Endothelial cell of umbilical vein (primary cell): ENCODE measurements at regions of chr2 and their contacts with region 1.

Region 1: DNA sequence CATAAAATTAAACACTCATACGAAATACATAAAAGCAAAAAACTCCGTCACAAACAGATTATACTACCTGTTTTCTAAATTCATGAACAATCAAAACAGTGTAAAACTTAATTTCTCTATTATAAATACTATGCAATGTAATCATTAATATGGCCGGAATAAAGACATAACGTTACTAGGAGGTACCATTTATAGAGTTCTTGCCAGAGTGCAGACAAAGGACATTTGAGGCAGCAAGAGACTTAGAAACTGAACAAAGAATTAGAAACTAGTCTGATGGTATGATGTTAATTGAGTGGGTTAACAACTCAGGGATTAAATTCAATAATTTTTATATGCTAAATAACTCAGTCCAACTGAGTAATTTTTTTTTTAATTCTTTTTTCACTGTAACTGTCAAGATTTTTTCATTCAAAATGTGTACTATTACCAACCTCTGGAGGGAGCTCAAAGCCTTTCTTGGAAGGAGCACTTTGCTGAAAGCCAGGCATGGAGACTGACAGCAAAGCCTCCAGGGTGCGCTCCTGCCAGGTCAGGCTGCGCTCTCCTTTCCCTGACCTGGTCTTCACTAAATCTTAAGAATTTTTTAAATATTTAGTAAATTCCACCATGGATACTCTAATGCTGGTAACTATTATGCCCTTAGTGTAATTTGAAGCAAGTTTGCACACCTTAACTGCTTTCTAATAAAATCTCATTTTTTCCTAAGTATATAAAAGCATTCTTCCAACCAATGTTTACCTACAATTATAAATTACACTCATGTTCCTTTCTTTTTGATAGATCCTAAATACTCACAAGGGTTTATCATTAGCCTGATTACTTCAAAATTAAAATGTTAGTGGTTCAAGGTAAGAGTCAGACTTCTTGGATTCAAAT is 34.1 kb downstream of the WDR35 start:
- DNase-seq: peak; percentile 80
- H3K4me3 ChIP-seq: no peak overlapping the region
- H3K27ac ChIP-seq: no peak overlapping the region
- H3K4me1 ChIP-seq: no peaks in the 10 kb centered on the region
- H3K27me3 ChIP-seq: no peaks in the 10 kb centered on the region
- CTCF ChIP-seq: peak; percentile 80 to 85
- POLR2A ChIP-seq: no peak

Region 2: GRCh38 chr2:19607931-19608771 is 347.6 kb before region 1 on chr2:
- CTCF ChIA-PET with region 1: no interaction called
- POLR2A ChIA-PET with region 1: no interaction called
- dilution Hi-C with region 1: no loop called
- intact Hi-C with region 1: no loop called
- DNase-seq: no peak
- H3K4me3 ChIP-seq: no peak overlapping the region
- H3K27ac ChIP-seq: no peak overlapping the region
- H3K4me1 ChIP-seq: no peaks in the 10 kb centered on the region
- H3K27me3 ChIP-seq: no peaks in the 10 kb centered on the region
- CTCF ChIP-seq: no peak
- POLR2A ChIP-seq: no peak

Region 3: GRCh38 chr2:19786408-19787058 is 169.2 kb before region 1 on chr2:
- CTCF ChIA-PET with region 1: no interaction called
- POLR2A ChIA-PET with region 1: no interaction called
- dilution Hi-C with region 1: no loop called
- intact Hi-C with region 1: no loop called
- DNase-seq: no peak
- H3K4me3 ChIP-seq: no peak overlapping the region
- H3K27ac ChIP-seq: no peak overlapping the region
- H3K4me1 ChIP-seq: no peaks in the 10 kb centered on the region
- H3K27me3 ChIP-seq: peaks cover 0 to 2% of the 10 kb centered on the region in 2 experiments
- CTCF ChIP-seq: no peak
- POLR2A ChIP-seq: no peak

Region 4: GRCh38 chr2:19901442-19902215 is 54.2 kb before region 1 on chr2 and contains the start of gene TTC32:
- CTCF ChIA-PET with region 1: interaction called, 3 read pairs
- POLR2A ChIA-PET with region 1: no interaction called
- dilution Hi-C with region 1: no loop called
- intact Hi-C with region 1: loop called (anchors 2 kb)
- DNase-seq: peak; percentile 97
- H3K4me3 ChIP-seq: peak within 1 kb of the TSS; percentile 28 to 97 (median 86)
- H3K27ac ChIP-seq: peak within 1 kb of the TSS; percentile 90
- H3K4me1 ChIP-seq: peaks cover 25% of the 10 kb centered on the region
- H3K27me3 ChIP-seq: no peaks in the 10 kb centered on the region
- CTCF ChIP-seq: peak in 1 of 2 donors; percentile 12
- POLR2A ChIP-seq: peak; percentile 89
- total RNA-seq, gene TTC32: 8.8 and 13.8 TPM in 2 replicates

Region 5: GRCh38 chr2:19971691-19972090 is 15.9 kb after region 1 on chr2:
- CTCF ChIA-PET with region 1: interaction called, 17 read pairs
- POLR2A ChIA-PET with region 1: no interaction called
- dilution Hi-C with region 1: no loop called
- intact Hi-C with region 1: no loop called
- DNase-seq: peak; percentile 77
- H3K4me3 ChIP-seq: no peak overlapping the region
- H3K27ac ChIP-seq: peak overlapping the region; percentile 83
- H3K4me1 ChIP-seq: peaks cover 13% of the 10 kb centered on the region
- H3K27me3 ChIP-seq: no peaks in the 10 kb centered on the region
- CTCF ChIP-seq: no peak
- POLR2A ChIP-seq: no peak

Region 6: DNA sequence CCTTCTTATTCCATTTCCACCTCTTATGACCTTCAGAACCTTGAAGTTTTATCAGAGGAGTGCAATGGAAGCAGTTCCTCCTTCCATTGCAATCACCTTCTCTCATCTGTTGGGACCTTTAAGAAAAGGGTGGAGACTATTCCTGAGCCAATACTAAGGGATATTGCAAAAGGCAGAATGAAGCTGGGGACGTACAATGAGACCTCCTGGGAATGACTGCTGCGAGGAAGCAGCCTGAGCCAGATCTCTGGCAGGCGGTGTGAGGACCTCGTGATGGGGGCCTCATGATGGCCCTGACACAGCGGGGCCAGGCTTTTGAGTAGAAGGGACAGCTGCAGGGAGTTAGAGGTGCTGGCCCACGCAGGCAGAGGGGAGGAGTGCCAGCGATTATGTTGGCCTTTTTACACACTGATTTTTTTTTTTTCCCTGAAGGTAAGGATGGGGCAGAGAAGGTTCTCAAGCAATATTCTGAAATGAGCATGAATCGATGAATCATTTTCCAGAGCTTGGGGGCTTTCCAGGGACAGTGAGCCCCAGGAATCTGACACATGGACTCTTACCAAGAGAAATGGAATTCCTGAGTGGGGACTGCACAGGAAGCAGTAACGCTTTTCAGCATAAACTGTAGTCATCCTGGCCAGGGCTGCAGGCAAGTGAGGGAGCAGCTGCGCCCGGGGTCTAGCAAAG is 135.7 kb after region 1 on chr2:
- CTCF ChIA-PET with region 1: interaction called, 91 read pairs
- POLR2A ChIA-PET with region 1: no interaction called
- dilution Hi-C with region 1: no loop called
- intact Hi-C with region 1: loop called (anchors 1 kb)
- DNase-seq: peak; percentile 61
- H3K4me3 ChIP-seq: no peak overlapping the region
- H3K27ac ChIP-seq: no peak overlapping the region
- H3K4me1 ChIP-seq: no peaks in the 10 kb centered on the region
- H3K27me3 ChIP-seq: peaks cover 2 to 8% of the 10 kb centered on the region in 2 experiments
- CTCF ChIP-seq: no peak
- POLR2A ChIP-seq: no peak

Region 7: GRCh38 chr2:20106746-20107145 is 151.0 kb after region 1 on chr2:
- CTCF ChIA-PET with region 1: interaction called, 15 read pairs
- POLR2A ChIA-PET with region 1: no interaction called
- dilution Hi-C with region 1: no loop called
- intact Hi-C with region 1: no loop called
- DNase-seq: peak; percentile 27
- H3K4me3 ChIP-seq: peak overlapping the region in 1 of 3 experiments; percentile 26
- H3K27ac ChIP-seq: no peak overlapping the region
- H3K4me1 ChIP-seq: no peaks in the 10 kb centered on the region
- H3K27me3 ChIP-seq: peaks cover 2 to 3% of the 10 kb centered on the region in 2 experiments
- CTCF ChIP-seq: peak; percentile 47 to 80
- POLR2A ChIP-seq: no peak